ENCODE measurements at regions of chr1 and their contacts with region 1.

Region 1: DNA sequence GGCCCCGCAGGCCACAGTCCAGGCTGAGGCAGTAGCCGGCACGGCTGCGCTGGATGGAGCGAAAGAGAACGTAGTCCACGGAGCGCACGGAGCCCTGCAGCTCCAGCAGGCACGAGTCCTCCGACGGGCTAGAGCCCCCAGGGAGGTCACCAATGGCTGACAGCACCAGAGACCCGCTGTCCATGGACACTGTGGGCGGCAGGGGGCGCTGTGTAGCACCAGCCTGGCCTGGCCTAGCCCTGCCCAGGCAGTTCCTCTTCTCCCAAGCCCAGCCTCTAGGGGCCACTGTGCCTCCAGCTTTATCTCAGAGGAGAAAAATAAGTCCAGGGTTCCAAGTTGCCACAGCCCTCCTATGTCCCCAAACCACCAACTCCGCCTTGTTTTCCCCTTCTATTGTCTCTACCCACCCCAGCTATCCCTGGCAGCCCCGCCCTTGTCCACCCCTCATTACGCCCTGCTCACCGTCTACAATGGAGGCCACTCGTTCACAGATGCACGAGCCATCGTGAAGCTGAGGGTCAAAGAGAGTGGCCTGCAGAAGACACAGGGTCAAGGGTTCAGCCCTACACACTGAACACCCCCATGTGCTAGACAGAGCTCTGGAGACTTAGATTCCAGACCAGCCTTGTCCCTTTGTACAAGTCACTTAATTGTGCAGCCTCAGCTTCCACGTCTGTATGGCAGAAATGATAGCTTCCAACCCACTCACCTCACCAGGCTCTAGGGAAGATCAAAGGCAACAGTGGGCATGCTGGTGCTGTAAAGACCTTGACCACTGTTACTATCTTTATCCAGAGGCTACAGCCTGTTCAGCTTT is 4.4 kb downstream of the ENTREP3 start:
- DNase-seq: peak; percentile 57
- ATAC-seq: peak; percentile 97
- H3K4me3 ChIP-seq: peak overlapping the region; percentile 72
- H3K27ac ChIP-seq: peak overlapping the region; percentile 38
- H3K4me1 ChIP-seq: peaks cover 13% of the 10 kb centered on the region
- H3K27me3 ChIP-seq: no peaks in the 10 kb centered on the region
- CTCF ChIP-seq: peak; percentile 100; a peak in 5 of 6 replicates
- EP300 ChIP-seq: no peak
- POLR2A ChIP-seq: peak; percentile 65
- RAD21 ChIP-seq: peak; percentile 89

Region 2: GRCh38 chr1:154335025-154335714 is 915.7 kb before region 1 on chr1:
- CTCF ChIA-PET with region 1: no interaction called
- POLR2A ChIA-PET with region 1: no interaction called
- RAD21 ChIA-PET with region 1: no interaction called
- SMC1A ChIA-PET with region 1: no interaction called
- in situ Hi-C with region 1: no loop called
- intact Hi-C with region 1: no loop called
- DNase-seq: no peak
- ATAC-seq: peak; percentile 99
- H3K4me3 ChIP-seq: no peak overlapping the region
- H3K27ac ChIP-seq: no peak overlapping the region
- H3K4me1 ChIP-seq: no peaks in the 10 kb centered on the region
- H3K27me3 ChIP-seq: no peaks in the 10 kb centered on the region
- CTCF ChIP-seq: peak; percentile 75 to 88 (median 84)
- EP300 ChIP-seq: no peak
- POLR2A ChIP-seq: no peak
- RAD21 ChIP-seq: peak; percentile 77

Region 3: DNA sequence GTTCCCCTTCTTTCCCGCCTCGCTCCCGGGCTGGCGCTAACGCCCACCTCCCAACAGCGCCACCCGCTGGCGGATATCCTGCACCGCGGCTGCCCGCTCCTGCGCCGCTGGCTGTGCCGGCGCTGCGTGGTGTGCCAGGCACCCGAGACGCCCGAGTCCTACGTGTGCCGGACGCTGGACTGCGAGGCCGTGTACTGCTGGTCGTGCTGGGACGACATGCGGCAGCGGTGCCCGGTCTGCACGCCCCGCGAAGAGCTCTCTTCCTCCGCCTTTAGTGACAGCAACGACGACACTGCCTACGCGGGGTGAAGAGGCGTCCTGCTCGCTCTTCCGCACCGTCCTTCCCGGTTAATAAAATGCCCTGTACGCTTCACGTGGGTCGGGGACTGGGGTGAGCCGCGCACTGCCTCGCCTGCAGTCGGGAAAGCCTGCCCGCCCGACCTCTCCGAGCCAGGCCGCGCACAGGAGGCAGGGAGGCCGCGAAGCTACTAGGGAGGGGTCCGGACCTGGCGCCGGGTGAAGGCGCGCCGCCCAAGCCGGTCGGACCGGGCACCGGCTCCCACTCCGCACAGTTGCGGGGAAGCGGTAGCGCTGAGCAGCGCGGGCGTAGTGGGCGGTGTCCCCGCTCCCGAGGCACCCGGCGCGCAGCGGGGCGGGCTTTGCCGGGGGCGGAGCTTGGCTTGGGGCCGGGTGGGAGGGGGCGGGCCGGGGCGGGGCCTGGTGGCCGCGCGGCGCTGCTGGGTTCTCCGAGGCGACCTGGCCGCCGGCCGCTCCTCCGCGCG is 200.1 kb before region 1 on chr1 and contains the start of gene ADAM15:
- CTCF ChIA-PET with region 1: no interaction called
- POLR2A ChIA-PET with region 1: no interaction called
- RAD21 ChIA-PET with region 1: no interaction called
- SMC1A ChIA-PET with region 1: no interaction called
- in situ Hi-C with region 1: no loop called
- intact Hi-C with region 1: no loop called
- DNase-seq: no peak
- ATAC-seq: peak; percentile 89
- H3K4me3 ChIP-seq: peak within 1 kb of the TSS; percentile 91
- H3K27ac ChIP-seq: peak within 1 kb of the TSS; percentile 15; the same call in 1 of the 2 replicates
- H3K4me1 ChIP-seq: peaks cover 13% of the 10 kb centered on the region
- H3K27me3 ChIP-seq: no peaks in the 10 kb centered on the region
- CTCF ChIP-seq: peak; percentile 91 to 92 (median 91)
- EP300 ChIP-seq: no peak
- POLR2A ChIP-seq: peak; percentile 51; the same call in 1 of the 2 replicates
- RAD21 ChIP-seq: peak; percentile 35; the same call in 1 of the 2 replicates
- polyA plus RNA-seq, gene ADAM15: 0.29 to 0.79 TPM

Region 4: DNA sequence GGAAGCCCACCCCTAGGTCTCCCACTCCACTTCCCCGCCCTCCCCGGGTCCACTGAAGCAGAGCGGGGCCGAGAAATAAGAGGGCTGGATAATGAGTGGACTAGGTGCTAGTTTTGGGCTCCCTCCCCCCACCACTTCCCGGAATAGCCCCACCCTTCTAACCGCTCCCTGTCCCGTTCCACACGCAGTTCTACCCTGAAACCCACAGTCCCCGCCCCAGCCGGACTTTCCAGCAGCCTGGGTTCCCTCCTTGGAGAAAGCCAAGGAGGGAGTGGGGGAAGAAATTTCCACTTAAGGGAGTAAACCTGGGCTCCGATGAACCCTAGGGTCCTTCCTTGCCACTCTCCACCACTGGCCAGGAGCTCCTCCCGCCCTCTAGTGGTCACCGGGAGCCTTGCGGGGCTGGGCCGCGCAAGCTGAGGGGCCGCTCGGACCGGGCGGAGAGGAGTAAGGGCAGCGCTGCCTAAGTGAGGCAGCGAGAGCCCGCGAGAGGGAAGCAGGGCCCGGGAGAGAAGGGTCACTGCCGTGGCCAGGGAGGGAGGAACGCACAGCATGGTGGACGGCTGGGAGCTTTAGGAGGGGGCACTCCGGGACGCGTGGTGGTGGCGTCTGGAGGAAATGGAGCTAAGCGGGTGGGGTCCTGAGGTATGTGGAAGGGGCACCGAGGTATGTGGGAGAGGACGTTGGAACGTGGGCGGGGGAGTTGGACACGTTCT is 57.4 kb before region 1 on chr1:
- CTCF ChIA-PET with region 1: interaction called, 26 read pairs
- POLR2A ChIA-PET with region 1: interaction called, 3 read pairs
- RAD21 ChIA-PET with region 1: no interaction called
- SMC1A ChIA-PET with region 1: interaction called, 3 read pairs
- in situ Hi-C with region 1: no loop called
- intact Hi-C with region 1: no loop called
- DNase-seq: no peak
- ATAC-seq: peak; percentile 93
- H3K4me3 ChIP-seq: peak overlapping the region; percentile 77
- H3K27ac ChIP-seq: peak overlapping the region; percentile 22
- H3K4me1 ChIP-seq: peaks cover 16% of the 10 kb centered on the region
- H3K27me3 ChIP-seq: no peaks in the 10 kb centered on the region
- CTCF ChIP-seq: peak; percentile 96 to 99 (median 99)
- EP300 ChIP-seq: no peak
- POLR2A ChIP-seq: peak; percentile 47; the same call in 1 of the 2 replicates
- RAD21 ChIP-seq: peak; percentile 68

Region 5: DNA sequence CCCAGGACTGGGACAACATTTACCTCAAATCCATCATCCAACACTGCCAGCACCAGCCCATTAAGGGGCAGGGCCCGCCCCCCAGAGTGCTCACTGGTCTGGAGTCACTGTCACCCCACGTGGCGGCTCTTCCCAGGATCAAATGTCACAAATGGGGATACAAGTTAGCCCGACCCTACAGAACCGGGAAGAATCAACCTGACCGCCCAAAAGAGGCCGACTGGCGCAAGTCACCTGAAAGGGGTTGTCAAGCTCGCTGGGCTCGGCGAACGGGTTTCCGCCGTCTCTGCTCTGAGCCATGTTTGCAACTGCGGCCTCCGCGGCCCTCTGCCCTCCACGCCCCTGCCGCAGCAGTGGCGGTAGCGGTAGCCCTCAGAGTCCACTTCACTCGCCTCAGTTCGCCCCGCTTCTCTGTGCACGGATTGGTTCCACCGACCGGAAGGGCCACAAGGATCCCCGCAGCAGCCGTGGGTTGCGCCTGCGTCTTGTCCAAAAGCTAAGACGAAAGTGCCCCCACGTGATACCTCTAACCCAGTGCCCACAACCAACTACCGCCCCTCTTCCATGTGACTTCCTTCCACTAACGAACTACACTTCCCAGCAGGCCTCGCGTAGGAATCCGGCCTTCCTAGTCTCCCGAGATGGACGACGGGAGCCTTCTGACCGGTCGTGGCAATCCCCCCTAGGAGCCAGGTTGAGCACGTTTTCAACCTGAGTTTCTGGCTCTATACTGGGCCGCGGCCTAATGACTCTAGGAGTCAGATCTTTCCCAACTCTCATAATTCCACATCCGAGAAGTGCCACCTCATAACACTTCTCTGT is 11.2 kb after region 1 on chr1 and contains the start of gene SCAMP3:
- CTCF ChIA-PET with region 1: interaction called, 78 read pairs
- POLR2A ChIA-PET with region 1: interaction called, 9 read pairs
- RAD21 ChIA-PET with region 1: interaction called, 26 read pairs
- SMC1A ChIA-PET with region 1: interaction called, 6 read pairs
- in situ Hi-C with region 1: no loop called
- intact Hi-C with region 1: no loop called
- DNase-seq: peak; percentile 96
- ATAC-seq: peak; percentile 98
- H3K4me3 ChIP-seq: peak within 1 kb of the TSS; percentile 77
- H3K27ac ChIP-seq: peak within 1 kb of the TSS; percentile 84
- H3K4me1 ChIP-seq: peaks cover 7% of the 10 kb centered on the region
- H3K27me3 ChIP-seq: no peaks in the 10 kb centered on the region
- CTCF ChIP-seq: no peak
- EP300 ChIP-seq: no peak
- POLR2A ChIP-seq: peak; percentile 94
- RAD21 ChIP-seq: no peak
- polyA plus RNA-seq, gene SCAMP3: 55.1 to 84.1 TPM

Region 6: GRCh38 chr1:155308493-155309422 is 57.9 kb after region 1 on chr1 and contains the start of gene FDPS:
- CTCF ChIA-PET with region 1: interaction called, 74 read pairs
- POLR2A ChIA-PET with region 1: interaction called, 6 read pairs
- RAD21 ChIA-PET with region 1: interaction called, 44 read pairs
- SMC1A ChIA-PET with region 1: interaction called, 44 read pairs
- in situ Hi-C with region 1: no loop called
- intact Hi-C with region 1: no loop called
- DNase-seq: peak; percentile 99
- ATAC-seq: peak; percentile 95
- H3K4me3 ChIP-seq: peak within 1 kb of the TSS; percentile 96
- H3K27ac ChIP-seq: peak within 1 kb of the TSS; percentile 99
- H3K4me1 ChIP-seq: peaks cover 14% of the 10 kb centered on the region
- H3K27me3 ChIP-seq: no peaks in the 10 kb centered on the region
- CTCF ChIP-seq: no peak
- EP300 ChIP-seq: 0 out of 4 replicates have a peak, but pooled peaks of 1 of the 2 experiments have one; percentile 48
- POLR2A ChIP-seq: peak; percentile 84
- RAD21 ChIP-seq: no peak
- polyA plus RNA-seq, gene FDPS: 1,058 to 1,156 TPM

Region 7: GRCh38 chr1:155339515-155340097 is 88.8 kb after region 1 on chr1:
- CTCF ChIA-PET with region 1: interaction called, 18 read pairs
- POLR2A ChIA-PET with region 1: no interaction called
- RAD21 ChIA-PET with region 1: no interaction called
- SMC1A ChIA-PET with region 1: interaction called, 4 read pairs
- in situ Hi-C with region 1: no loop called
- intact Hi-C with region 1: no loop called
- DNase-seq: no peak
- ATAC-seq: no peak
- H3K4me3 ChIP-seq: no peak overlapping the region
- H3K27ac ChIP-seq: no peak overlapping the region
- H3K4me1 ChIP-seq: no peaks in the 10 kb centered on the region
- H3K27me3 ChIP-seq: no peaks in the 10 kb centered on the region
- CTCF ChIP-seq: no peak
- EP300 ChIP-seq: no peak
- POLR2A ChIP-seq: no peak
- RAD21 ChIP-seq: no peak

Region 8: DNA sequence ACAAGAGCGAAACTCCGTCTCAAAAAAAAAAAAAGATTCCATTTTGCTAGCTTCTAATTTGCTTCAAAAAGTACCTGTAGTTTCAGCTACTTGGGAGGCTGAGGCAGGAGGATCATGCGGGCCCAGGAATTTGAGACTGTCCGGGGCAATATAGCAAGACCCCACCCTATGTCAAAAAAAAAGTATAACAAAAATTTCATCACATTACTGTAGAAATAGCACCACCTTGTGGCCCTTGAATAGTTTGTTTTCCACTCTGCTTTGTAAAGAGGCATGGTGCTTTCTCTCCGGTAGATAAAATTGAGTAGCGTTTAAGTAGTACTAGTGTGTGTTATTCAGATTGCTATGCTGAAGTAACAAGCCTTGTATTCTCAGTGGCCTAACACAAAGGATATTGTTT is 340.9 kb after region 1 on chr1:
- CTCF ChIA-PET with region 1: interaction called, 18 read pairs
- POLR2A ChIA-PET with region 1: no interaction called
- RAD21 ChIA-PET with region 1: no interaction called
- SMC1A ChIA-PET with region 1: interaction called, 13 read pairs
- in situ Hi-C with region 1: loop called (anchors 5 kb)
- intact Hi-C with region 1: loop called (anchors 2 kb)
- DNase-seq: peak; percentile 24
- ATAC-seq: peak; percentile 79
- H3K4me3 ChIP-seq: no peak overlapping the region
- H3K27ac ChIP-seq: no peak overlapping the region
- H3K4me1 ChIP-seq: no peaks in the 10 kb centered on the region
- H3K27me3 ChIP-seq: no peaks in the 10 kb centered on the region
- CTCF ChIP-seq: peak; percentile 43 to 60 (median 50); a peak in 5 of 6 replicates
- EP300 ChIP-seq: no peak
- POLR2A ChIP-seq: no peak
- RAD21 ChIP-seq: peak; percentile 72

Measured in GM12878 (cell line).